ENCODE measurements at regions of chr1 and their contacts with region 1.

Region 1: DNA sequence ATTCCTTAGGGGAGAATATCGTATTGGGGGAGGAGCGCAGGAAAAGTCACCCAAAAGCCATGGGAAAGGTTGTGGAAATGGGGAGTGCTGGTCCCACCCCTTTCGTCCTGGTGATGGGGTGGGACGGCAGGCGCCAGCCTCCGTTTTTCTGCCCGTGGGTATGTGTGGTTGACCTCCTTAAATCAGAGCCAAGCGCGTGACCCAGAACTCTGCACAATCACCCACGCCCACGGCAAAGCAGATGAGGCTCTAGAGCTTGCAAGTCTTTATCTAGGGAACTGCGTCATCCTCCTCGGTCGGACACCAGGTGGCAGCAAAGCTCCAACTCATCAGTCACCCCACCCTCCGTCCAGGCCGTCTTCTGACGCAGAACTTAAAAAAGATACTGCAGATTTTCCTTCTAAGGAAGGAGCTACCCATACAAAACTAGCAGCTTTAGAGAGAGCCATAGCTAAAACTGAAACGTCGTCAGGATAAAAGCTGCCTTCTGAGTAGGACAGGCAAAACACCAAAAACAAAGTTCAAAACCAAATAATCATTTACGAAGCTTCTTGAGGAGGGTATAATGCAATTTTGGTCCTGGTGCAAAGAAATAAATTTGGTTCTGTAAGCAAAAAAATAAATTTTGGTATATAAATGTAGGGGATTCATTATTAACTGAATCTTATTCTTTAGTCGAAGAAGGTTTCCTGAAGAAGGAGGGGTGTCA is 62.0 kb downstream of the TBX19 start:
- DNase-seq: peak; percentile 89
- ATAC-seq: peak; percentile 100
- H3K4me3 ChIP-seq: no peak overlapping the region
- H3K4me3 Mint-ChIP-seq: peak overlapping the region; percentile 48
- H3K27ac ChIP-seq: no peak overlapping the region
- H3K27ac Mint-ChIP-seq: peak overlapping the region; percentile 57
- H3K4me1 ChIP-seq: peaks cover 3 to 7% of the 10 kb centered on the region in 2 donors
- H3K4me1 Mint-ChIP-seq: peaks cover 6% of the 10 kb centered on the region
- H3K27me3 ChIP-seq: no peaks in the 10 kb centered on the region
- H3K27me3 Mint-ChIP-seq: peaks cover 5% of the 10 kb centered on the region
- CTCF ChIP-seq: peak; percentile 87

Region 2: DNA sequence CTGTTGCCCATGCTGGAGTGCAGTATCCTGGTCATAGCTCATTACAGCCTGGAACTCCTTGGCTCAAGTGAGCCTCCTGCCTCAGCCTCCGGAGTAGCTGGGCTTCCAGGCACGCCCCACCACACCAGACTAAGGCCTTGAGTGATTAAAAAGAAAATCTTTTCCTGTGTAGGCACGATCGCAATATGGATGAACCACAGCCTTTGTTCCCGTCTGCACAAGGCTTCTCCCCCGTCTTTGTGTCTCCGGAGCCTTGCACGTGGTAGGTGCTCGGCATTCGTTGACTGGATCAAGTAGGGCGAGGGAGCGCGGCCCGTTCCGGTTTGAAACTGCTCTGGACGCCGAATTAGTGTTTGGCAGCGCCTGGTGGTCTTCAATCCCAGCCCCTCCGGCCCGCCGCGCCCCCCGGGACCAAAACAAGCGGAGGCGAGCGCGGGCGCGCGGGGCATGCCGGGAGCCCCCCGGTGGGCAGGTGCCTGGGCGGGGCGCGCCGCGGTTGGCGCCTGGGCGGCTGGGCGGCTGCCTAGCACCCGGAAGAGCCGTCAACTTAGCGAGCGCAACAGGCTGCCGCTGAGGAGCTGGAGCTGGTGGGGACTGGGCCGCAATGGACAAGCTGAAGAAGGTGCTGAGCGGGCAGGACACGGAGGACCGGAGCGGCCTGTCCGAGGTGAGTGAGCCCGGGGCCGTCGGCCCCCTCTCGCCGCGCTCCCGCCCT is 117.1 kb before region 1 on chr1 and contains the start of gene SFT2D2:
- CTCF ChIA-PET with region 1: interaction called, 3 read pairs
- POLR2A ChIA-PET with region 1: interaction called, 3 read pairs
- intact Hi-C with region 1: loop called (anchors 5 kb)
- DNase-seq: peak; percentile 87
- ATAC-seq: peak; percentile 93
- H3K4me3 ChIP-seq: peak within 1 kb of the TSS; percentile 71 to 89 (median 84)
- H3K4me3 Mint-ChIP-seq: peak within 1 kb of the TSS; percentile 89
- H3K27ac ChIP-seq: peak within 1 kb of the TSS; percentile 73 to 91
- H3K27ac Mint-ChIP-seq: peak within 1 kb of the TSS; percentile 98
- H3K4me1 ChIP-seq: peaks cover 42 to 45% of the 10 kb centered on the region in 2 donors
- H3K4me1 Mint-ChIP-seq: peaks cover 49% of the 10 kb centered on the region
- H3K27me3 ChIP-seq: no peaks in the 10 kb centered on the region
- H3K27me3 Mint-ChIP-seq: peaks cover 2% of the 10 kb centered on the region
- CTCF ChIP-seq: no peak
- total RNA-seq, gene SFT2D2: 68.3 and 79.0 TPM in 2 replicates

Region 3: GRCh38 chr1:168365719-168366479 is 23.2 kb after region 1 on chr1:
- CTCF ChIA-PET with region 1: interaction called, 25 read pairs
- POLR2A ChIA-PET with region 1: no interaction called
- intact Hi-C with region 1: loop called (anchors 2 kb)
- DNase-seq: peak; percentile 13
- ATAC-seq: no peak
- H3K4me3 ChIP-seq: no peak overlapping the region
- H3K4me3 Mint-ChIP-seq: no peak overlapping the region
- H3K27ac ChIP-seq: no peak overlapping the region
- H3K27ac Mint-ChIP-seq: no peak overlapping the region
- H3K4me1 ChIP-seq: no peaks in the 10 kb centered on the region
- H3K4me1 Mint-ChIP-seq: no peaks in the 10 kb centered on the region
- H3K27me3 ChIP-seq: peaks cover 0 to 12% (median 5%) of the 10 kb centered on the region in 4 experiments
- H3K27me3 Mint-ChIP-seq: peaks cover 51% of the 10 kb centered on the region
- CTCF ChIP-seq: no peak

Region 4: GRCh38 chr1:169044296-169044695 is 701.6 kb after region 1 on chr1:
- CTCF ChIA-PET with region 1: no interaction called
- POLR2A ChIA-PET with region 1: no interaction called
- intact Hi-C with region 1: no loop called
- DNase-seq: peak; percentile 14
- ATAC-seq: no peak
- H3K4me3 ChIP-seq: no peak overlapping the region
- H3K4me3 Mint-ChIP-seq: no peak overlapping the region
- H3K27ac ChIP-seq: no peak overlapping the region
- H3K27ac Mint-ChIP-seq: no peak overlapping the region
- H3K4me1 ChIP-seq: peaks cover 16% of the 10 kb centered on the region in 2 donors
- H3K4me1 Mint-ChIP-seq: peaks cover 23% of the 10 kb centered on the region
- H3K27me3 ChIP-seq: no peaks in the 10 kb centered on the region
- H3K27me3 Mint-ChIP-seq: peaks cover 10% of the 10 kb centered on the region
- CTCF ChIP-seq: no peak

Region 5: DNA sequence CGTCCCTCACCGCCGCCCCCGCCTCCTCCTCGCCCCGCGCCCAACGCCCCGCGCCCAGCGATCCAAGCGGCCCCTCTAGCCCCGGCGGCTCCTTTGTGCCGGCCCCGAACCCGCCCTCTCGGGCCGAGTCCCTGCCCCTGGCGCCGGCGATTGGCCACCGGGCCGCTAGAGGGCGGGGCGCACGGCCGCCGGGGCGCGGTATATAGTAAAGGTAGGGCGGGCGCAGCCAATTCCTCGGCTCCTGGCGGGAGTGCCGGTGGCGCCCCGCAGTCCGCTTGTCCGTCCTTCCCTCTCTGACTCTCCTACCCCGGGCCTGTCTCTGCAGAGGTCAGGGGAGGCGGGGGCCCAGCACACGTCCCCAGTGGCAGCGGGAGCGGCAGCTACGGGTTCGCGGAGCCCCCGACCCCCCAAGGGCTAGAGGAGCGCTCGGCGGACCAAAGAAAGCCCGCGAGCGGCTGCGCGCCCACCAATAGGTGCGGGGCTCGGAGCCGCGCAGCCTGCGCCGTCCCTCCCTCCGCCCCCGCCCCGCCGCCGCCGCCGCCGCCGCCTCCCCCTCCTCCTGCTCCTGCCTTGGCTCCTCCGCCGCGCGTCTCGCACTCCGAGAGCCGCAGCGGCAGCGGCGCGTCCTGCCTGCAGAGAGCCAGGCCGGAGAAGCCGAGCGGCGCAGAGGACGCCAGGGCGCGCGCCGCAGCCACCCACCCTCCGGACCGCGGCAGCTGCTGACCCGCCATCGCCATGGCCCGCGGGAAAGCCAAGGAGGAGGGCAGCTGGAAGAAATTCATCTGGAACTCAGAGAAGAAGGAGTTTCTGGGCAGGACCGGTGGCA is 763.6 kb after region 1 on chr1 and contains the start of gene ATP1B1:
- CTCF ChIA-PET with region 1: interaction called, 5 read pairs
- POLR2A ChIA-PET with region 1: no interaction called
- intact Hi-C with region 1: loop called (anchors 2 kb)
- DNase-seq: peak; percentile 81
- ATAC-seq: peak; percentile 95
- H3K4me3 ChIP-seq: peak within 1 kb of the TSS; percentile 17 to 78 (median 63)
- H3K4me3 Mint-ChIP-seq: no peak within 1 kb of the TSS
- H3K27ac ChIP-seq: no peak within 1 kb of the TSS
- H3K27ac Mint-ChIP-seq: peak within 1 kb of the TSS; percentile 63
- H3K4me1 ChIP-seq: peaks cover 17 to 18% of the 10 kb centered on the region in 2 donors
- H3K4me1 Mint-ChIP-seq: peaks cover 16% of the 10 kb centered on the region
- H3K27me3 ChIP-seq: peaks cover 0 to 45% (median 24%) of the 10 kb centered on the region in 4 experiments
- H3K27me3 Mint-ChIP-seq: peaks cover 37% of the 10 kb centered on the region
- CTCF ChIP-seq: peak; percentile 58
- total RNA-seq, gene ATP1B1: 1.7 and 3.1 TPM in 2 replicates

Region 6: GRCh38 chr1:169546087-169546995 is 1203.6 kb after region 1 on chr1:
- CTCF ChIA-PET with region 1: interaction called, 55 read pairs
- POLR2A ChIA-PET with region 1: no interaction called
- intact Hi-C with region 1: no loop called
- DNase-seq: peak; percentile 81
- ATAC-seq: peak; percentile 82
- H3K4me3 ChIP-seq: no peak overlapping the region
- H3K4me3 Mint-ChIP-seq: no peak overlapping the region
- H3K27ac ChIP-seq: no peak overlapping the region
- H3K27ac Mint-ChIP-seq: no peak overlapping the region
- H3K4me1 ChIP-seq: no peaks in the 10 kb centered on the region
- H3K4me1 Mint-ChIP-seq: no peaks in the 10 kb centered on the region
- H3K27me3 ChIP-seq: no peaks in the 10 kb centered on the region
- H3K27me3 Mint-ChIP-seq: peaks cover 13% of the 10 kb centered on the region
- CTCF ChIP-seq: peak; percentile 78

Region 7: GRCh38 chr1:169809370-169810095 is 1466.8 kb after region 1 on chr1:
- CTCF ChIA-PET with region 1: interaction called, 11 read pairs
- POLR2A ChIA-PET with region 1: no interaction called
- intact Hi-C with region 1: no loop called
- DNase-seq: peak; percentile 62
- ATAC-seq: no peak
- H3K4me3 ChIP-seq: no peak overlapping the region
- H3K4me3 Mint-ChIP-seq: no peak overlapping the region
- H3K27ac ChIP-seq: no peak overlapping the region
- H3K27ac Mint-ChIP-seq: no peak overlapping the region
- H3K4me1 ChIP-seq: no peaks in the 10 kb centered on the region
- H3K4me1 Mint-ChIP-seq: no peaks in the 10 kb centered on the region
- H3K27me3 ChIP-seq: no peaks in the 10 kb centered on the region
- H3K27me3 Mint-ChIP-seq: no peaks in the 10 kb centered on the region
- CTCF ChIP-seq: peak; percentile 81